Activated CD8-positive, alpha-beta T cell treated with anti-CD3 and anti-CD28 coated beads for 36 hours (primary cell): ENCODE measurements at regions of chr3 and their contacts with region 1.

Region 1: DNA sequence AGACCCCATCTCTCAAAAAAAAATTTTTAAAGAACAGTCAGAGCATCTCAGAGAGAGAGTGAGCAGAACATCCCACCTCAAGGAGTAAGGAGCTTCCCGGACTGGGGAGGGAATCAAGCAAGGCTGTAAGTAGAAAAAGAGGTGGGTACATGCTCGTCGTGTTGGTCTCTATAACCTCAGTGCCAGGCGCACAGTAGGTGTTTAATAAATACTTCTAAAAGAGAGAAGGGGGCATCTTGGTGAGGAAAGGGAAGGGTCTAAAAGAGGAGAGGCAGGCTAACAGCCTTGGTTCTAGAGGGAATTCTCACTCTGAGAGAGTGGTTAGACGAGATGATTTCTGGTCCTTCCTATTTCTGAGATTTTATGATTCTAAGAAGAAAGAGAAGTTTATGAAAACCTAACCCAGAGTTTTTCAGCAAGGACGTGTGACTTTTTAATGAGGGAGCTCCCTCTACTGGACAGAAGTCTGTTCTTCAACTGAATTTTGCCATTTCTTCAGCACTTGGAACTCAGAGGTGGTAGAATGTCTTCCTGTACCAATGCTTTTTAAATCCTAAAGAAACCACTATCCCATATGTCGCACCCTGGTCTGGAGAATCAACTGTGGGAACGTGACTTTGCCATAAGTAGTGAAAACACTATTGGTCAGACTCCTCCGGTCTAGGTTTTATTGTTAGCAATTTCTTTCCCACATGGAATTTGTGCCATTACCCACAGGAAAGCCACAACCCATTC is 199.7 kb upstream of the LMCD1 start:
- DNase-seq: peak; percentile 3
- ATAC-seq: no peak
- H3K4me3 Mint-ChIP-seq: no peak overlapping the region
- H3K27ac Mint-ChIP-seq: no peak overlapping the region
- H3K4me1 Mint-ChIP-seq: peaks cover 4% of the 10 kb centered on the region
- H3K27me3 Mint-ChIP-seq: no peaks in the 10 kb centered on the region
- CTCF ChIP-seq: peak; percentile 65

Region 2: DNA sequence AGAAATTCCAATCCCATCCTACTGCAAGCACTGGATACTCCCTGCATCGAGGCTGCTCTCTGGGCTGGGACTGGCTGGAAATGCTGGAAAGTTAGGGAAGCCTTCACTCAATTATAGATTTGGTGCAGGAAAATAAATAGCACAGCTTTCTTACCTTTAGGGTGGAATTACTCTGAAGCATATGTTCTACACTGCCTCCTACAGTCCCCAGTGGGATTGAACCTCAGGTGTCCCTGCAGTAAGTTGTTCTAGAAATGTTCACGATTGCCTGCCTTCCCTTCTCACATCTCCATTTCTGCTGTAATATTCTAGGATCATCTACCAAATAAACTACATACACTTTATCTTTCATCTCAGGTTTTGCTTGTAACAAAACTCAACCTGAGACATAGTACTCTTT is 337.0 kb before region 1 on chr3:
- CTCF ChIA-PET with region 1: no interaction called
- POLR2A ChIA-PET with region 1: no interaction called
- intact Hi-C with region 1: no loop called
- DNase-seq: no peak
- ATAC-seq: no peak
- H3K4me3 Mint-ChIP-seq: no peak overlapping the region
- H3K27ac Mint-ChIP-seq: no peak overlapping the region
- H3K4me1 Mint-ChIP-seq: no peaks in the 10 kb centered on the region
- H3K27me3 Mint-ChIP-seq: no peaks in the 10 kb centered on the region
- CTCF ChIP-seq: no peak

Region 3: DNA sequence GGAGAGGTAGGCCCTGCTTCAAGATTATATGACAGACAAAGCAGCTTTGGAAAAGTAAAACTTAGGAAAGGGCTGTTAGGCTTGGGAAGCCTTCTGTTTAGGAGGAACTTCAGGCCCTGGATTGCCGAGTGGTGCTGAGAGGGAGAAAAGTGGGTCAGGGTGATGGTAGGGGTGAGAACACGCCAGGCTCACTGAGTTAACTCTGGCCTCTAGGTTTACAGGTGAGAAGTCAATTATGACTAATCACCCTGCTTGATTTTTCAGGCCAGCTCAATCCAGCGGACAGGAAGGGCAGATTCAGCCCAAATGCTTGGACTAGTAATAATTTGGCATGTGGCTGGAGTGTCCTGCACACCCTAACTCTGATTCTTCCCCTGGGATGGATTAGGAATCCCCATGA is 165.3 kb before region 1 on chr3:
- CTCF ChIA-PET with region 1: no interaction called
- POLR2A ChIA-PET with region 1: no interaction called
- intact Hi-C with region 1: loop called (anchors 10 kb)
- DNase-seq: no peak
- ATAC-seq: no peak
- H3K4me3 Mint-ChIP-seq: no peak overlapping the region
- H3K27ac Mint-ChIP-seq: no peak overlapping the region
- H3K4me1 Mint-ChIP-seq: no peaks in the 10 kb centered on the region
- H3K27me3 Mint-ChIP-seq: no peaks in the 10 kb centered on the region
- CTCF ChIP-seq: no peak

Region 4: GRCh38 chr3:8290611-8291010 is 11.3 kb before region 1 on chr3:
- CTCF ChIA-PET with region 1: interaction called, 14 read pairs
- POLR2A ChIA-PET with region 1: no interaction called
- intact Hi-C with region 1: no loop called
- DNase-seq: no peak
- ATAC-seq: no peak
- H3K4me3 Mint-ChIP-seq: no peak overlapping the region
- H3K27ac Mint-ChIP-seq: no peak overlapping the region
- H3K4me1 Mint-ChIP-seq: no peaks in the 10 kb centered on the region
- H3K27me3 Mint-ChIP-seq: no peaks in the 10 kb centered on the region
- CTCF ChIP-seq: no peak